ENCODE measurements at regions of chrX and their contacts with region 1.

Region 1: DNA sequence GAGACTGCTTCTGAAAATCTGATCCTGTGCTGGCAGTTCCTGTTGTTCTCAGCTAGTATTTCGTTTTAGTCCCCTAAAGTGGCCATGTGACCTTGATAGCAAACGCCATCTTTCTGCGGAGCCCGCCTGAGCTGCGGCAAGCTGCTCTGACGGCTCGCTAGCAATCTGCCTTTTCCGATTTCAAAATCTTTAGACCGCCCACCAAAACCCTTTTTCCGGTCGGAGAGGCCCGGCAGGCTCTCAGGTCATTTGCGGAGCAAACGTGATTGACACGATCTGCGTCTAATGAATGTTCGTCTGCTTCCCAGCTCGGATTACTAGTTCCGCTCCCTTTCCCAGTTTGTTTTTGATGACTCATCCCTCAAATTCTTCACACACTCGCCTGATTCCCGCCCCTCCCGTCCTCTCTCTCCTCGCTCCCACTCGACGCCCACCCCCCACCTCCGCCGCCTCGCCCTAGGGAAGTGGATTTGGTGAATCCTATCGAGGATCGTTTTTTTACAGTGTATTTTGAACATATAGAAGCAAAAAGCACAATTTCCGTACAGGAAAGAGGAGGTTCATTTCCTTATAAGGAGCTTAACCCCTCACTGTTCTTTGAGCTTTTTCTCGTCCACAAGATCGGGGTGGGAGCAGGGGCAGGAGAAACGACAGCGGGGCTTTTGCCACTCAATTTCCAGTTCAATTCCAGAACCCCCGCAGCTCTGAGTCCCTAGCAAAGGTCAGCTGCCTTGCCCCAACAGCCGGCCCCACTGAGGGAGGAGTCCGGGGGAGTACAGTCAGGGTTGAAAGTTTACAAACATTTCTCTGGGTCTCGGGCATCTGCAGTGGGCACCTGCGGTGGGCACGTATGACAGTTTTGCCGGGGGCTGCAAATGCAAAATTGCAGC is 37.5 kb downstream of the NLGN3 start:
- DNase-seq: peak; percentile 89
- ATAC-seq: peak; percentile 97
- H3K4me3 Mint-ChIP-seq: peak overlapping the region; percentile 86
- H3K27ac Mint-ChIP-seq: peak overlapping the region; percentile 97
- H3K4me1 Mint-ChIP-seq: peaks cover 13% of the 10 kb centered on the region
- H3K27me3 Mint-ChIP-seq: no peaks in the 10 kb centered on the region

Region 2: DNA sequence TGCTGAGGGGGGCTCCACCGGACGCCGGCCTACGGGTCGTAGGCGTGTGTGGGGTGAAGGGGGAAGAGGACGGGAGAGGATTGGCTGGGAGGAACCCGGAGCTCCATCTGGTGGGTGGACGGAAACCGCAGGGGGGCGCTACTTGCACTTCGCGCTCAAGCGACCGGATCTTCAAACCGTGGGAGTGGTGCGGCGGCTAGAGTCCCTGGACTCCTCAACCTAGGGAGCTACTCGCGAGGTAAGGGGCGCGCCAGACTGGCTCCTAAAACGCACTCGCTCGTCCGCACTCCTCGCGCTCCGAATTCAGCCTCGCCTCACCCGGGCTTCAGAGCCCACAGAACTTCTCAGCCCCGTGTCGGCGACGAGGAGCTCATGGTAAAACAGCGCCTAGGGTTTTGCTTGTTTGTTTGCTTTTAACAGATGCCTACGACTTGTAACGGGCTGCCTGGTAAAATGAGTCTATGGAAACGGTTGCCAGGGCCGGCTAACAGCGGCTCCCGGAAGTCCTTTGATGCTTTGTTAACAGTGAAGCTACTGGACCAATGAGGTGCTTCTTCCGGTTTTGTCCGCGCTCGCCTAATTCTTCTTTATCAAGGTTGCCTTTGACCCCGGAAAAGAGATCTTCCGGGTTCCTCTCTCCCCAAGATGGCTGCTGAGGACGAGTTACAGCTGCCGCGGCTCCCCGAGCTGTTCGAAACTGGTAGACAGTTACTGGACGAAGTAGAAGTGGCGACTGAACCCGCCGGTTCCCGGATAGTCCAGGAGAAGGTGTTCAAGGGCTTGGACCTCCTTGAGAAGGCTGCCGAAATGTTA is 1048.6 kb before region 1 on chrX and contains the start of gene IGBP1:
- CTCF ChIA-PET with region 1: no interaction called
- POLR2A ChIA-PET with region 1: no interaction called
- intact Hi-C with region 1: loop called in 1 of 2 experiments (anchors 5 kb)
- DNase-seq: peak; percentile 83
- ATAC-seq: peak; percentile 85
- H3K4me3 Mint-ChIP-seq: peak within 1 kb of the TSS; percentile 99
- H3K27ac Mint-ChIP-seq: peak within 1 kb of the TSS; percentile 97
- H3K4me1 Mint-ChIP-seq: peaks cover 28% of the 10 kb centered on the region
- H3K27me3 Mint-ChIP-seq: no peaks in the 10 kb centered on the region
- total RNA-seq, gene IGBP1: 44.4 to 46.3 TPM

Region 3: DNA sequence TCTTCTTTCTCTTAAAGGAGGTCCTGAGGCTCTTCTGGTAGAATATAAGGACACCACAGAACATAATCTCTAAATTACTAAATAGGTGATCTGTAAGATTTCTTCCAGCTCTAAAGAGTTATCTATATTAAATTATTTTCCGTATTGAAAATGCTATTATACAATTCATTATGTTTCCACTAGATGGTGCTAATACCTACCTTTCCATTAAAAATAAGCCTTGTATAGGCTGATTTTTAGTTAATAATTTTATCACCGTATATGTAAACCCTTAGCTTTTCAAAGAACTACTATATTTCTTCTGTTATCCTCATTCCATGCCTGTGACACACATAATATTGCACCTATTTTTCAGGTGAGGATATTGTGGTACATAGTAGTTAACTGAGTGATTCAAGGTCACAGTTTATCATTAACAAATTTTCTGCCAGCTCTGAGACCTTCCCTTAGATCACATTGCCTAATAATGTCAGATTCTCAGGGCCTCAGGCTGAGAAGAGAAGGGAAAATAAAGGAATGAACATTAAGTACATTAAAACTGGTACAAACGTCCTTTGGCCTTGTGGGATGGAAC is 412.4 kb before region 1 on chrX:
- CTCF ChIA-PET with region 1: no interaction called
- POLR2A ChIA-PET with region 1: no interaction called
- intact Hi-C with region 1: loop called (anchors 2 to 10 kb)
- DNase-seq: no peak
- ATAC-seq: no peak
- H3K4me3 Mint-ChIP-seq: no peak overlapping the region
- H3K27ac Mint-ChIP-seq: no peak overlapping the region
- H3K4me1 Mint-ChIP-seq: no peaks in the 10 kb centered on the region
- H3K27me3 Mint-ChIP-seq: no peaks in the 10 kb centered on the region

Region 4: DNA sequence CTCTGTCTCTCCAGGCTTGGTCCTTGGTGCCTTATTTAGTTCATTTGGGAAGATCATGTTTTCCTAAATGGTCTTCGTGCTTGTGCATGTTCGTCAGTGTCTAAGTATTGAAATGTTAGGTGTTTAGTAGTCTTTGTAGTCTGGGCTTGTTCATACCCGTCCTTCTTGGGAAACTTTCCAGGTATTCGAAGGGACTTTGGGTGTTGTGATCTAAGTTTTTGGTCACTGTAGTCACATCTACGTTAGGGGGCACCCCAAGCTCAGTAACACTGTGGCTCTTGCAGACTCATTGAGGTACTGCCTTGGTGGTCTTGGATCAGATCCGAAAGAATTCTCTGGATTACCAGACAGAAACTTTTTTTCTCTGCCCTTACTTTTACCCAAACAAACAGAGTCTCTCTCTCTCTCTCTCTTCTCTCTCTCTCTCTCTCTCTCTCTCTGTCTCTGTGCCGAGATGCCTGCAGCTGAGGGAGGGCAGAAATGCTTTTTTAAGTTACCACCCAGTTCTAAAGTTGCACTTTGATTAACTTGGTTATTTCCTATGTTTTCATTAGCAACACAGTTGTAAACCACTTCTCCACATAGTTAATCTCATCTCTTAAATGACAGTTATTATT is 183.6 kb before region 1 on chrX:
- CTCF ChIA-PET with region 1: no interaction called
- POLR2A ChIA-PET with region 1: no interaction called
- intact Hi-C with region 1: loop called in 1 of 2 experiments (anchors 2 kb)
- DNase-seq: peak; percentile 20
- ATAC-seq: peak; percentile 58
- H3K4me3 Mint-ChIP-seq: no peak overlapping the region
- H3K27ac Mint-ChIP-seq: no peak overlapping the region
- H3K4me1 Mint-ChIP-seq: peaks cover 10% of the 10 kb centered on the region
- H3K27me3 Mint-ChIP-seq: no peaks in the 10 kb centered on the region

Region 5: GRCh38 chrX:71095543-71095911 is 86.6 kb before region 1 on chrX and contains the start of gene FOXO4:
- CTCF ChIA-PET with region 1: interaction called, 4 read pairs
- POLR2A ChIA-PET with region 1: no interaction called
- intact Hi-C with region 1: loop called (anchors 1 kb)
- DNase-seq: peak; percentile 92
- ATAC-seq: peak; percentile 93
- H3K4me3 Mint-ChIP-seq: peak within 1 kb of the TSS; percentile 89
- H3K27ac Mint-ChIP-seq: peak within 1 kb of the TSS; percentile 83
- H3K4me1 Mint-ChIP-seq: peaks cover 27% of the 10 kb centered on the region
- H3K27me3 Mint-ChIP-seq: no peaks in the 10 kb centered on the region
- total RNA-seq, gene FOXO4: 9.5 to 10.8 TPM

Region 6: DNA sequence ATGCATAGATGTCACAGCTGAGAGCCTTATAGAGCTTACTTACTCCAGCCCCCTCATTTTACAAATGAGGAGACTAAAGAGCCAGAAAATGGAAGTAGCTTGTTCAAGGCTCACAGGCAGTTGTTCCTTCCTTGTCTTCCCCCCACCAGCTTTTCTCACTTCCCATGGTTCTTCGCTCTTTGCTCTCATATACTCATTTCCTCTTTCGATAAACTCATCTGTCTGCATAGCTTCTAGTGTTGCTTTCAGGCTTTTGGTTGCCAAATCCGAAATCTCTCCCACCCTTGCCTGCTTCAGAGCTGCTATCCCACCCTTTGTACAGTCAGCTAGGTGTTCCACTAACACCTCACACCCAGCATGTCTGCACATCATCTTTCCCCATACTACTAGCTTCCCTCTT is 15.9 kb after region 1 on chrX:
- CTCF ChIA-PET with region 1: interaction called, 4 read pairs
- POLR2A ChIA-PET with region 1: interaction called, 4 read pairs
- intact Hi-C with region 1: loop called (anchors 1 kb)
- DNase-seq: no peak
- ATAC-seq: peak; percentile 53
- H3K4me3 Mint-ChIP-seq: peak overlapping the region; percentile 76
- H3K27ac Mint-ChIP-seq: peak overlapping the region; percentile 86
- H3K4me1 Mint-ChIP-seq: peaks cover 17% of the 10 kb centered on the region
- H3K27me3 Mint-ChIP-seq: no peaks in the 10 kb centered on the region

Region 7: GRCh38 chrX:71216485-71216884 is 34.3 kb after region 1 on chrX:
- CTCF ChIA-PET with region 1: no interaction called
- POLR2A ChIA-PET with region 1: no interaction called
- intact Hi-C with region 1: no loop called
- DNase-seq: no peak
- ATAC-seq: no peak
- H3K4me3 Mint-ChIP-seq: no peak overlapping the region
- H3K27ac Mint-ChIP-seq: no peak overlapping the region
- H3K4me1 Mint-ChIP-seq: peaks cover 3% of the 10 kb centered on the region
- H3K27me3 Mint-ChIP-seq: no peaks in the 10 kb centered on the region

Region 8: DNA sequence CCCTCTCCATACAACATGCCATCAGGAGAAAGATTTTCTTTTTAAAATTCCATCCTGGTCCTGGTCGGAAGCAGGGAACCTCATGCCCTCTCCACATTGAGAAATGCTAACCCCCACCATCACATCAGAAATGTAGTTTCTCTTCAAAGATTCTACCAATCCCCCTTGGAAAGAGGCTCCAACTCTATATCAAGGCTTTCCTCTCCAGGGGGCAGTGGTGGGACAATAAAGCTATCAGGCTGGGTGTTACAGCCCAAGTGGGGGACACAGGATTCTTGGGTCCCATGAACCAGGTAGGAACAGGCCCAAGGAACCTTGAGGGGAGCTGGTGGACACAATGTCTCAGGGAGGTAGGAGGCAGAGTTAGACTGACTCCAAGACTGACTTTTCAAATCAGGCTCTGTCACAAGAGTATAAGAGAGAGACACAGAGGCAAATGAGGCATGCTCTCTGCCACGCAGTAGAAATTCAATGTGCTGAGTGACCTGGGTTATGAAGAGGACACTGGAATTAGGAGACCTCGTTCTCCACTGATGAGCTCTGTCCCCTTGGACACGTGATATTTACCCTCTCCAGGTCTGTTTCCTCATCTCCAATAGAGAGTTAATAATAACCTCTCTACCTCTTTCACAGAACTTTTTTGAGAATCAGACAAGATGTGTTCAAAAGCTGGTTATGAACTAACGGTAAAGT is 45.4 kb after region 1 on chrX:
- CTCF ChIA-PET with region 1: no interaction called
- POLR2A ChIA-PET with region 1: no interaction called
- intact Hi-C with region 1: no loop called
- DNase-seq: no peak
- ATAC-seq: no peak
- H3K4me3 Mint-ChIP-seq: no peak overlapping the region
- H3K27ac Mint-ChIP-seq: no peak overlapping the region
- H3K4me1 Mint-ChIP-seq: no peaks in the 10 kb centered on the region
- H3K27me3 Mint-ChIP-seq: no peaks in the 10 kb centered on the region

Region 9: GRCh38 chrX:71283403-71284143 is 101.4 kb after region 1 on chrX and contains the start of gene NONO:
- CTCF ChIA-PET with region 1: interaction called, 3 read pairs
- POLR2A ChIA-PET with region 1: interaction called, 13 read pairs
- intact Hi-C with region 1: loop called (anchors 1 kb)
- DNase-seq: peak; percentile 90
- ATAC-seq: peak; percentile 80
- H3K4me3 Mint-ChIP-seq: peak within 1 kb of the TSS; percentile 92
- H3K27ac Mint-ChIP-seq: peak within 1 kb of the TSS; percentile 98
- H3K4me1 Mint-ChIP-seq: peaks cover 9% of the 10 kb centered on the region
- H3K27me3 Mint-ChIP-seq: no peaks in the 10 kb centered on the region
- total RNA-seq, gene NONO: 508 to 1,161 TPM

Region 10: GRCh38 chrX:71315917-71316316 is 133.8 kb after region 1 on chrX:
- CTCF ChIA-PET with region 1: no interaction called
- POLR2A ChIA-PET with region 1: no interaction called
- intact Hi-C with region 1: no loop called
- DNase-seq: no peak
- ATAC-seq: no peak
- H3K4me3 Mint-ChIP-seq: no peak overlapping the region
- H3K27ac Mint-ChIP-seq: no peak overlapping the region
- H3K4me1 Mint-ChIP-seq: no peaks in the 10 kb centered on the region
- H3K27me3 Mint-ChIP-seq: no peaks in the 10 kb centered on the region